Caco-2 (cell line): ENCODE measurements at regions of chr9 and their contacts with region 1.

Region 1: DNA sequence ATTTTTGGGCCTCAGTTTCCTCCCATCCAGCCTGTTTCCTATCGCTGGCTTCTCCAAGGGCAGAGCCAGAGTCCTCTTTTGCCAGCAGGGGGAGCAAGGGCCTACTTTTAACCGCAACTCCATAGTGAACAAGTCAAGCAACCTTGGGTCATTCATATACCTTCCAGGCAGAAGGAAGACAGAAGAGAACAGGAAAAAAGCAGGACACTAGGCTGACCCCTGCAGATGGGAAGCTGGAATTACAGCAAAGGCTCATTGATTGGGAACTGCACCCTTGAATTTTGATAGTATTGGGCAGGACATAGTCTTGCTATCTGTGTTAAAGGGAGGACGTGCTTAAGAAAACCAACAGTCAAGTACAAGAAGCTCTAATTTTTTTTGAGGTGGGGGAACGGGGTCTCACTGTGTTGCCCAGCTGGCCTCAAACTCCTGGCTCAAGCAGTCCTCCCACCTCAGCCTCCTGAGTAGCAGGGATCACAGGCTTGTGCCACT is 30.1 kb downstream of the QRFP start:
- DNase-seq: peak; percentile 90
- H3K4me3 ChIP-seq: no peak overlapping the region
- H3K4me3 Mint-ChIP-seq: no peak overlapping the region
- H3K27ac Mint-ChIP-seq: no peak overlapping the region
- H3K4me1 ChIP-seq: peaks cover 6% of the 10 kb centered on the region
- H3K4me1 Mint-ChIP-seq: no peaks in the 10 kb centered on the region
- H3K27me3 ChIP-seq: no peaks in the 10 kb centered on the region
- H3K27me3 Mint-ChIP-seq: no peaks in the 10 kb centered on the region
- CTCF ChIP-seq: peak; percentile 85 to 90

Region 2: DNA sequence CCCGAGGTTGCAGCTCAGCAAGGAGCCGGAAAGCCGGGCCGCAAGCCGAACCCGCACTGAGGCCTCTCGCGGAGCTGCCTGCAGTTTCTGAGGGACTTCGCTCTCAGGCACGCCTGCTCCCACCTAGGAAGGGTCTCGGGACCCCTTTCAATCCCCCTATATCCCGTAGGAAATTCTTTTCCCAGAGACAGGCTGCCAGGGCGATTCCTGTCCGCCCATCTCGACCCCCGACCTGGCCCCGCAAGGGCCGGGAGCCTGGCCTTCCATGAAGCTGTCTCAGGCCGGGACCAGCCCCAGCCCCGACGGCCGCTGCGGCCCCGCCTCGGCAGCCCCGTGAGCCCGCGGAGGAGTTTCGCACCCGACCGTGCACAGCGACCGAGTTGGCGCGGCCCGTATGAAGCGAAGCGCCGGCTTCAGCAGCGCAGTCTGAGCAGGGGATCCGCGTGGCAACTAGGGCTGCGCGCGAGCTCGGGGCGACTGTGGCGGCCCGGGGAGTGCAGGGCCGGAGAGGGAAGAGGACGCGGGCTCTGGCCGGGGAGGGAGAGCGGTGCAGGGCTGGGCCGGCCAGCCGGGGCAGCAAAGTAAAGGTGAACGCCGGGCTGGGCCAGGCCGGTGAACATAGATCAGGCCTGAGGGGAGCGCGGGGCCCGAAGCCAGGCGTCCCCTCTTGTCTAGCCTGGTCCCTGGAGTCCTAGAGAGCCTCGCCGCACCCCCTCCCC is 203.1 kb before region 1 on chr9:
- CTCF ChIA-PET with region 1: no interaction called
- POLR2A ChIA-PET with region 1: no interaction called
- intact Hi-C with region 1: no loop called
- DNase-seq: no peak
- H3K4me3 ChIP-seq: no peak overlapping the region
- H3K4me3 Mint-ChIP-seq: peak overlapping the region; percentile 43
- H3K27ac Mint-ChIP-seq: no peak overlapping the region
- H3K4me1 ChIP-seq: no peaks in the 10 kb centered on the region; the same call in 1 of the 2 replicates
- H3K4me1 Mint-ChIP-seq: peaks cover 7% of the 10 kb centered on the region
- H3K27me3 ChIP-seq: peaks cover 6% of the 10 kb centered on the region
- H3K27me3 Mint-ChIP-seq: peaks cover 26% of the 10 kb centered on the region
- CTCF ChIP-seq: no peak

Region 3: DNA sequence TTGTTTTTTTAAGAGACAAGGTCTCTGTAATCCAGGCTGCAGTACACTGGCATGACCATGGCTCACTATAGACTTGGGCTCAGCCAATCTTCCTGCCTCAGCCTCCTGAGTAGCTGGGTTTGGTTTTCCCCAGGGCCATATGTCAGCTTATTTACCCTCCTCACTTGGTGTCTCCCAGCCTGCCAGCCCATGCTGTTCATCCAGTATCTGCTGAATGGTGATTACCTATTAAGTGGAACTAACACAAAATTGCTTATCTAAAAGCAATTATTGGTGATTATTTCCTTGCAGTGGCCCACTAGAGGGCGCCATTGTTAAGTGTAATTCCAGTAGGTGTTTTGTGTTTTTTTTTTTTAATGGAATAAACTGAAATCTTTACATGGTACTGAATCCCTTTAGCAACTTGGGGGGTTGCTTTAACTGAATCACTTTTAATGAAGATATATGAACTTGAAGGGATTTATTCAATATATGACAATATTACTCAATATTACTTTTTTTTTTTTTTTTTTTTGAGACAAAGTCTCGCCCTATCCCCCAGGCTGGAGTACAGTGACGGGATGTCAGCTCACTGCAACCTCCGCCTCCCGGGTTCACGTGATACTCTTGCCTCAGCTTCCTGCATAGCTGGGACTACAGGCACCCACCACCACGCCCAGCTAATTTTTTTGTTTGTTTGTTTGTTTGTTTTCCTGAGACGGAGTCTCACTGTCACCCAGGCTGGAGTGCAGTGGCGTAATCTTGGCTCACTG is 159.1 kb before region 1 on chr9:
- CTCF ChIA-PET with region 1: interaction called, 6 read pairs
- POLR2A ChIA-PET with region 1: no interaction called
- intact Hi-C with region 1: loop called (anchors 1 kb)
- DNase-seq: peak; percentile 69 to 70
- H3K4me3 ChIP-seq: no peak overlapping the region
- H3K4me3 Mint-ChIP-seq: no peak overlapping the region
- H3K27ac Mint-ChIP-seq: no peak overlapping the region
- H3K4me1 ChIP-seq: 0 out of 2 replicates have a peak, but pooled peaks cover 3% of the 10 kb centered on the region
- H3K4me1 Mint-ChIP-seq: no peaks in the 10 kb centered on the region
- H3K27me3 ChIP-seq: no peaks in the 10 kb centered on the region
- H3K27me3 Mint-ChIP-seq: no peaks in the 10 kb centered on the region
- CTCF ChIP-seq: peak; percentile 69

Region 4: DNA sequence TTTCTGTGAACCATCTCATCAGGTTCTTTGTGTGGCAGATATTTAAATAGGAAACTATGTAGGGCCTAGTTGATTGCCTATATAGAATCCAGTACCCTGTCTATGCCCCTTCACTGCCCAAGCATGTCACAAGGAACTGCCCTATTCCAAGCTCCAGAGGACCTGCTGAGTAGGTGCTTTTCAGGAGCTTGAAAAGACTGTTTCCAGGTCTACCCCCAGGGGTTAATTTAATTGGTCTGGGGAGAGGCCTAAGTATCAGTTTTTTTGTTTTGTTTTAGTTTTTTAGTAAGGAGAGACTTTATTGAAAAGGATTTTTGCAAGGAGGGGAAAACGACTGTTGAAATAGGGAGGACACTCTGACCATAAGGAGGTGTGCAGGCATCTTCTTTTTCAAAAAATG is 129.7 kb before region 1 on chr9:
- CTCF ChIA-PET with region 1: no interaction called
- POLR2A ChIA-PET with region 1: no interaction called
- intact Hi-C with region 1: no loop called
- DNase-seq: no peak
- H3K4me3 ChIP-seq: no peak overlapping the region
- H3K4me3 Mint-ChIP-seq: no peak overlapping the region
- H3K27ac Mint-ChIP-seq: no peak overlapping the region
- H3K4me1 ChIP-seq: no peaks in the 10 kb centered on the region
- H3K4me1 Mint-ChIP-seq: peaks cover 7% of the 10 kb centered on the region
- H3K27me3 ChIP-seq: no peaks in the 10 kb centered on the region
- H3K27me3 Mint-ChIP-seq: no peaks in the 10 kb centered on the region
- CTCF ChIP-seq: no peak

Region 5: GRCh38 chr9:130770679-130771442 is 95.7 kb before region 1 on chr9:
- CTCF ChIA-PET with region 1: interaction called, 11 read pairs
- POLR2A ChIA-PET with region 1: no interaction called
- intact Hi-C with region 1: loop called (anchors 1 kb)
- DNase-seq: peak in 1 of 2 experiments; percentile 63
- H3K4me3 ChIP-seq: no peak overlapping the region
- H3K4me3 Mint-ChIP-seq: no peak overlapping the region
- H3K27ac Mint-ChIP-seq: no peak overlapping the region
- H3K4me1 ChIP-seq: peaks cover 11% of the 10 kb centered on the region
- H3K4me1 Mint-ChIP-seq: peaks cover 12% of the 10 kb centered on the region
- H3K27me3 ChIP-seq: no peaks in the 10 kb centered on the region
- H3K27me3 Mint-ChIP-seq: no peaks in the 10 kb centered on the region
- CTCF ChIP-seq: peak; percentile 51 to 57

Region 6: DNA sequence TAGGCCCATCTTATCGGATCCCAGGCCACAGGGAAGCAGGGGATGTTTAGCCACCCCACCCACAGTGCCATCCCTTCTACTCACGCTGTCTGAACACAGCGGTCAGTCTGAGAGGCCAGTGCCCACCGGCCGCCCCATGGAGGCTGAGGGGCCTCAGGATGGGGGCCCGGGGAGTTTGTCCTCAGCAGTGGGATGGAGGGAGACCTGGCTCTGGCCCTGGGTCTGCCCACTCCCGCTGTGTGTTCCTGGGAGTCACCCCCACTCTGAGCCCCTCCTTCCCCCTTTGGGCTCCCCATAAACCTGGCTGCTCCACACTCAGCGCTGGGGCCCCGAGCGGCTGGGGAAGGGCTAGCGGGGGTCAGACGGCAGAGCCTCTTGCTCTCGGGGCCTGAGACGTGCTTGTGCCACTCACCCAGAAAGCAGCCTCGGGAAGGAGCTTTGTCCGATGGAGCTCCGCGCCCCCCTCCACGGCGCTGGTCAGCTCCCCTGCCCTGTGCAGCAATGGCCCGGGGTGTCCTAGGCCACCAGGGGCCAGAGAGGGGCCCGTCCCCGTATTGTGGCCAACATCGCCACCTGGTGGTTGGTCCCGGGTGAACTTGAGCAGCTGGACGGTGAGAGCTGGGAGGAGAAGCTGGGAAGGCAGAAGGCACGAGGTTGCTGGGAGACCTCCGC is 131.5 kb after region 1 on chr9:
- CTCF ChIA-PET with region 1: interaction called, 27 read pairs
- POLR2A ChIA-PET with region 1: no interaction called
- intact Hi-C with region 1: loop called (anchors 1 kb)
- DNase-seq: peak; percentile 74 to 83
- H3K4me3 ChIP-seq: no peak overlapping the region
- H3K4me3 Mint-ChIP-seq: no peak overlapping the region
- H3K27ac Mint-ChIP-seq: no peak overlapping the region
- H3K4me1 ChIP-seq: no peaks in the 10 kb centered on the region
- H3K4me1 Mint-ChIP-seq: no peaks in the 10 kb centered on the region
- H3K27me3 ChIP-seq: no peaks in the 10 kb centered on the region
- H3K27me3 Mint-ChIP-seq: peaks cover 10% of the 10 kb centered on the region
- CTCF ChIP-seq: peak; percentile 61 to 75